HepG2 (cell line): ENCODE measurements at regions of chr9 and their contacts with region 1.

Region 1: GRCh38 chr9:133914442-133915342 is 77.4 kb downstream of the VAV2 start:
- DNase-seq: peak; percentile 80
- ATAC-seq: peak; percentile 81
- H3K4me3 ChIP-seq: peak overlapping the region in 1 of 3 experiments; percentile 40; a peak in 1 of 6 replicates
- H3K27ac ChIP-seq: peak overlapping the region; percentile 85
- H3K4me1 ChIP-seq: peaks cover 82% of the 10 kb centered on the region
- H3K27me3 ChIP-seq: no peaks in the 10 kb centered on the region
- CTCF ChIP-seq: peak; percentile 37
- EP300 ChIP-seq: peak; percentile 20 to 46; a peak in 1 of 4 replicates
- POLR2A ChIP-seq: peak in 1 of 2 experiments; percentile 39; a peak in 2 of 4 replicates
- RAD21 ChIP-seq: peak; percentile 38; the same call in 1 of the 2 replicates

Region 2: DNA sequence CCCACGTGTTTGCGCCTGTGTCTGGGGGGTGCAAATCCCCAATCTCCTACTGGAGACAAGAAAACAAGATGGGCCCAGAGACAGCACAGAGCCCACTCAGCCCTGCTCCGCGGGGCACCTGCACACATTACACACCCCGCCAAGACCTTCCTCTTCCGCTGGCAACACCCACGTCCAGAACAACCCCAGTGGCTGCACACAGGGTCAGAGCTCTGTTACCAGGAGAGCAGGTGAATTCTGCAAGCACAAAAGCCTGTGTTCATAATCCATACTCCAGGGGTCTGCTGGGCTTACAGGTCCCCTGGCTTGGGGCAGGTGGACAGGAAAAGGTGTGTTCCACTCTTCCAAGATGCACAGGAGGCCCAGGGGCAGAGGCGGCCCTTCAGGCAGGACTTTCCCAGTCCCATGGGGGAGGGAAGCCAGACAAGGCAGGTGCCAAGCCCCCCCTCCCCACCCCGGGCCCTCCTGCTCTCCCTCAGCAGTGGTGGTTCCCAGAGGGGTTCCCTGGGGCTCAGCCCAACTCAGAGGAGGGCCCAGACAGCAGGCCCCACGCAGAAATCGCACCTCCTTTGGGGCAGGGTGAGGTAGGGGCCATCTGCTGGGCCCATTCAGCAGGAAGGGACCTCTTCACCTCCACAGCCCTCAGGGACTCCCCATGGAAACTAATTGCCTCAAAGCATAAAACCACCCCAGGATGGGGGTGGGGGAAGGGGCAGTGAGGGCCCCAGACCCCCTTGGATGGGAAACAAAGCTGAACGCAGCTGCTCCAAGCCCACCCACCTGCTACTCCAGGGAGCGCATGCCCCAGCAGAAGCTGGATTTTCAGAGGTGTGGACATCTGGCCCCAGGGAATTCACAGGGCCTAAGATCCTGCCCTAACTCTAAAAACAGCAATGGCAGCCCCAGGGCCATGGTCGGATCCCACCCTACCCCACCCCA is 27.9 kb before region 1 on chr9:
- CTCF ChIA-PET with region 1: no interaction called
- POLR2A ChIA-PET with region 1: interaction called, 42 read pairs
- in situ Hi-C with region 1: no loop called
- intact Hi-C with region 1: loop called (anchors 2 kb)
- DNase-seq: no peak
- ATAC-seq: no peak
- H3K4me3 ChIP-seq: peak overlapping the region in 1 of 3 experiments; percentile 58; a peak in 1 of 6 replicates
- H3K27ac ChIP-seq: peak overlapping the region; percentile 95
- H3K4me1 ChIP-seq: peaks cover 95% of the 10 kb centered on the region
- H3K27me3 ChIP-seq: no peaks in the 10 kb centered on the region
- CTCF ChIP-seq: no peak
- EP300 ChIP-seq: no peak
- POLR2A ChIP-seq: no peak
- RAD21 ChIP-seq: no peak

Region 3: GRCh38 chr9:133892193-133892920 is 22.3 kb before region 1 on chr9:
- CTCF ChIA-PET with region 1: no interaction called
- POLR2A ChIA-PET with region 1: interaction called, 42 read pairs
- in situ Hi-C with region 1: no loop called
- intact Hi-C with region 1: loop called (anchors 2 kb)
- DNase-seq: peak; percentile 99
- ATAC-seq: peak; percentile 88
- H3K4me3 ChIP-seq: peak overlapping the region; percentile 3 to 54 (median 9); a peak in 4 of 6 replicates
- H3K27ac ChIP-seq: peak overlapping the region; percentile 96
- H3K4me1 ChIP-seq: peaks cover 89% of the 10 kb centered on the region
- H3K27me3 ChIP-seq: no peaks in the 10 kb centered on the region
- CTCF ChIP-seq: peak; percentile 37; the same call in 1 of the 2 replicates
- EP300 ChIP-seq: peak; percentile 91 to 96
- POLR2A ChIP-seq: peak in 1 of 2 experiments; percentile 82; a peak in 2 of 4 replicates
- RAD21 ChIP-seq: peak; percentile 82

Region 4: DNA sequence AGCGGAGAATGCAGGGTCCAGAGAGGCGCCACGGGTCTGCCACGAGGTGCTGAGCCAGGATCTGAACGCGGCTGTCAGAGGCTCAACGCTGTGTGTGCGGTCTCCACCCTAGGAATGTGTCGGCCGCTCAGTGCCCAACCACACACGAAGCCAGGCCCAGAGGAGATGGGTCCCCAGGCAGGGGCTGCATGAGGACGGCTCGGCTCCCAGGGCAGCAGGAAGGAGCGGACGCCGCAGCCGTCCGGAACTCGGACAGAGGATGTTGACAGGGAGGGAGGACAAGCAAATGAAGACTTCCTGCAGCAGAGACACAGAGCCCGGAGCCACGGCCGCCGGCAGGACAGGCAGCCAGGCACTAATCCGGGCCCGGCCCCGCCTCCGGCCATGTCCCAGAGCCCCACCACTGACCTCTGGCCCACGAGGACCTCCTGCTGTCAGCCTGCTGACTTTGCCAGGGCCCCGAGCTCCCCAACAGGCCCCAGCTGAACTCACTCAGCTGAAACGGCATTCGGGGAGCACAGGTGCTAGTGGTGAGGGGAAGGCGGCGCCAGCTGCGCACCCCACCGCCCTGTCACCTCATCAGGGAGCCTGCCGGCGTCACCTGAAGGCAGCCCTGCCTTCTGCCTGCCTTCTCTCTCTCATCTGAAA is 64.7 kb after region 1 on chr9:
- CTCF ChIA-PET with region 1: no interaction called
- POLR2A ChIA-PET with region 1: interaction called, 13 read pairs
- in situ Hi-C with region 1: no loop called
- intact Hi-C with region 1: no loop called
- DNase-seq: peak; percentile 80
- ATAC-seq: peak; percentile 81
- H3K4me3 ChIP-seq: peak overlapping the region; percentile 48 to 73 (median 48)
- H3K27ac ChIP-seq: peak overlapping the region; percentile 92
- H3K4me1 ChIP-seq: peaks cover 78% of the 10 kb centered on the region
- H3K27me3 ChIP-seq: no peaks in the 10 kb centered on the region
- CTCF ChIP-seq: peak; percentile 65
- EP300 ChIP-seq: peak in 1 of 2 experiments; percentile 46; a peak in 1 of 4 replicates
- POLR2A ChIP-seq: no peak
- RAD21 ChIP-seq: peak; percentile 20

Region 5: DNA sequence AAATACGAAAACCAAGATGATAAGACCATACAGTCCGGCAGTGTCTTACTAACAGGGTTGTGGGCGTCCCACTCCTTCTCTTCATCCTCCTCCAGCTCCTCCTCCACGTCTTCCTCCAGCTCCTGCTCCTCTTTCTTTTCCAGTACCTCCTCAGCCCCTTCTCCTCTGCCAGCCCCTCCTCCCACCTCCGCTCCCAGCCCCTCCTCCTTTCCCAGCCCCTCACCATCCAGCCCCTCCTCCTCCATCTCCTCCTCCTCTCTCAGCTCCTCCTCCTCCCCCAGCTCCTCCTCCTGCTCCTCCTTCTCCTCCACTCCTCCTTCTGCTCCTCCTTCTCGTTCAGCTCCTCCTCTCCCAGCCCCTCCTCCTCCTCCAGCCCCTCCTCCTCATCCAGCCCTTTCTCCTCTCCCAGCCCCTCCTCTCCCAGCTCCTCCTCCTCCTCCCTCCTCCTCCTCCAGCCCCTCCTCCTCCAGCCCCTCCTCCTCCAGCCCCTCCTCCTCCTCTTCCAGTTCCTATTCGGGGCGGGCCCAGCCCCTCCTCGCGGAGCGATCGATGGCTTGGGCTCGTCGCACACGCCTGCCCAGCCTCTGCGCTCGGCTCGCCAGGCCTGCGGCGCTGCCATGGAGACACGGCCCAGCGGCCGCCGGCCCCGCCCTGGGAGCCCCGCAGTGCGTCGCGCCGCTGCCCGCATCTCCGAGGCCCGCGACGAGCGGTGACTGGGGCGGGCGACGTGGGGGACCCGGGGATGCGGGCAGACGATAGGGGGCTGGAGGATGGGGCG is 110.3 kb after region 1 on chr9 and contains the start of gene BRD3OS:
- CTCF ChIA-PET with region 1: no interaction called
- POLR2A ChIA-PET with region 1: no interaction called
- in situ Hi-C with region 1: no loop called
- intact Hi-C with region 1: no loop called
- DNase-seq: peak; percentile 88
- ATAC-seq: peak; percentile 91
- H3K4me3 ChIP-seq: peak within 1 kb of the TSS; percentile 75 to 85 (median 77)
- H3K27ac ChIP-seq: no peak within 1 kb of the TSS
- H3K4me1 ChIP-seq: peaks cover 29% of the 10 kb centered on the region
- H3K27me3 ChIP-seq: no peaks in the 10 kb centered on the region
- CTCF ChIP-seq: no peak
- EP300 ChIP-seq: no peak; a peak in 1 of 4 replicates
- POLR2A ChIP-seq: no peak
- RAD21 ChIP-seq: no peak
- total RNA-seq, gene BRD3OS: 4.9 and 5.0 TPM in 2 replicates